H1 (cell line): ENCODE measurements at regions of chr15 and their contacts with region 1.

Region 1: GRCh38 chr15:80309769-80310384 is 57.9 kb upstream of the CTXND1 start:
- DNase-seq: no peak
- H3K4me3 ChIP-seq: no peak overlapping the region
- H3K27ac ChIP-seq: no peak overlapping the region
- H3K4me1 ChIP-seq: no peaks in the 10 kb centered on the region
- H3K27me3 ChIP-seq: no peaks in the 10 kb centered on the region
- CTCF ChIP-seq: peak; percentile 65 to 73 (median 73)
- EP300 ChIP-seq: no peak
- POLR2A ChIP-seq: no peak
- RAD21 ChIP-seq: peak; percentile 82 to 83

Region 2: DNA sequence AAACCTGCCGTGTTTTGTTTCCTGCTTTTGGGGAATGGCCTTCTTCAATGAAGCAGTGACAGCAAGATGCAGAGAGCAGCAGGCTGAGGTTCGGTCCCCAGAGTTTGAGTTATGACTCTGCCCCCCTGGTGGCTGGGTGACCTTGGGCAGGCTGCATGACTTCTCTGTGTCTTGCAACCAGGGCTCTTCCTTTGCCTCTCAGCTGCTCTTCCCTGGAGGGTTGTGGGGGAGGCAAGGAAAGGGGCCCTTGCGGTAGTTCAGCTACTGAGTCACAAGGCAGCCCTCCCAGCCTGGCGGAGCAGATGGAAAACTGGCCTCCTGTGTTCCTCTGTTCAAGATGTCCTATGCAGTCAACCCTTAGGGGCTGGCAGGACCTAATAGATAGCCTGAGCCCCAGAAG is 75.0 kb before region 1 on chr15:
- CTCF ChIA-PET with region 1: interaction called, 39 read pairs
- POLR2A ChIA-PET with region 1: no interaction called
- DNase-seq: peak; percentile 31 to 80
- H3K4me3 ChIP-seq: no peak overlapping the region
- H3K27ac ChIP-seq: no peak overlapping the region
- H3K4me1 ChIP-seq: no peaks in the 10 kb centered on the region
- H3K27me3 ChIP-seq: no peaks in the 10 kb centered on the region
- CTCF ChIP-seq: peak; percentile 57 to 78 (median 71)
- EP300 ChIP-seq: no peak
- POLR2A ChIP-seq: no peak
- RAD21 ChIP-seq: peak; percentile 45 to 53; a peak in 3 of 4 replicates

Region 3: GRCh38 chr15:80242132-80242769 is 67.6 kb before region 1 on chr15:
- CTCF ChIA-PET with region 1: interaction called, 39 read pairs
- POLR2A ChIA-PET with region 1: no interaction called
- DNase-seq: peak; percentile 34 to 77
- H3K4me3 ChIP-seq: no peak overlapping the region
- H3K27ac ChIP-seq: no peak overlapping the region
- H3K4me1 ChIP-seq: peaks cover 0 to 2% (median 0%) of the 10 kb centered on the region in 4 experiments; a peak in 2 of 7 replicates
- H3K27me3 ChIP-seq: no peaks in the 10 kb centered on the region; a peak in 2 of 7 replicates
- CTCF ChIP-seq: peak; percentile 67 to 92 (median 82)
- EP300 ChIP-seq: no peak
- POLR2A ChIP-seq: no peak
- RAD21 ChIP-seq: peak; percentile 68 to 80

Region 4: GRCh38 chr15:80266113-80266512 is 43.8 kb before region 1 on chr15:
- CTCF ChIA-PET with region 1: interaction called, 11 read pairs
- POLR2A ChIA-PET with region 1: no interaction called
- DNase-seq: no peak
- H3K4me3 ChIP-seq: no peak overlapping the region
- H3K27ac ChIP-seq: no peak overlapping the region
- H3K4me1 ChIP-seq: no peaks in the 10 kb centered on the region
- H3K27me3 ChIP-seq: peaks cover 0 to 5% (median 0%) of the 10 kb centered on the region in 4 experiments; a peak in 1 of 7 replicates
- CTCF ChIP-seq: no peak
- EP300 ChIP-seq: no peak
- POLR2A ChIP-seq: no peak
- RAD21 ChIP-seq: no peak

Region 5: DNA sequence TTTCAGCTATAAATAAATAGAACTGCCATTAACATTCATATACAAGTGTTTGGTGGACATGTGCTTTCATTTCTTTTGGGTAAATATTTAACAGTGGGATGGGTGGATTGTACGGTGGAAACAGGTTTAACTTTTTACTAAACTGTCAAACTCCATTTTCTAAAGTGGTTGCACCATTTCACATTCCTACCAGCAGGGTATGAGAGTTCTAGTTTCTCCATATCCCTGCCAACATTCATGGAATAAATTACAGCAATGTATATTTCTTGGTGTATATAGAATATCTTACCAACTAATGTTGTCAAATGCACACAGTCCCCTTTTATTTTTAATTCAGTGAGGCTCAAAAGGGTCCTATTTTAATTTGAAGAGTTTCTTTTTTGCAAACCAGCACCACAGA is 13.4 kb after region 1 on chr15:
- CTCF ChIA-PET with region 1: interaction called, 33 read pairs
- POLR2A ChIA-PET with region 1: no interaction called
- DNase-seq: no peak
- H3K4me3 ChIP-seq: no peak overlapping the region
- H3K27ac ChIP-seq: no peak overlapping the region
- H3K4me1 ChIP-seq: no peaks in the 10 kb centered on the region
- H3K27me3 ChIP-seq: no peaks in the 10 kb centered on the region
- CTCF ChIP-seq: no peak
- EP300 ChIP-seq: no peak
- POLR2A ChIP-seq: no peak
- RAD21 ChIP-seq: no peak